Activated CD4-positive, alpha-beta T cell treated with anti-CD3 and anti-CD28 coated beads for 36 hours (primary cell): ENCODE measurements at regions of chr2 and their contacts with region 1.

Region 1: GRCh38 chr2:26330113-26330549 is 15.8 kb upstream of the SELENOI start:
- DNase-seq: peak; percentile 94
- ATAC-seq: peak; percentile 97
- H3K4me3 Mint-ChIP-seq: no peak overlapping the region
- H3K27ac Mint-ChIP-seq: no peak overlapping the region
- H3K4me1 Mint-ChIP-seq: peaks cover 9% of the 10 kb centered on the region
- H3K27me3 Mint-ChIP-seq: no peaks in the 10 kb centered on the region

Region 2: GRCh38 chr2:25991965-25992364 is 338.2 kb before region 1 on chr2:
- CTCF ChIA-PET with region 1: no interaction called
- POLR2A ChIA-PET with region 1: no interaction called
- intact Hi-C with region 1: loop called in 1 of 2 experiments (anchors 1 kb)
- DNase-seq: no peak
- ATAC-seq: peak; percentile 33
- H3K4me3 Mint-ChIP-seq: no peak overlapping the region
- H3K27ac Mint-ChIP-seq: no peak overlapping the region
- H3K4me1 Mint-ChIP-seq: peaks cover 8% of the 10 kb centered on the region
- H3K27me3 Mint-ChIP-seq: no peaks in the 10 kb centered on the region

Region 3: GRCh38 chr2:26033270-26033817 is 296.8 kb before region 1 on chr2:
- CTCF ChIA-PET with region 1: no interaction called
- POLR2A ChIA-PET with region 1: no interaction called
- intact Hi-C with region 1: no loop called
- DNase-seq: no peak
- ATAC-seq: peak; percentile 31
- H3K4me3 Mint-ChIP-seq: peak overlapping the region; percentile 98
- H3K27ac Mint-ChIP-seq: peak overlapping the region; percentile 90
- H3K4me1 Mint-ChIP-seq: peaks cover 26% of the 10 kb centered on the region
- H3K27me3 Mint-ChIP-seq: no peaks in the 10 kb centered on the region

Region 4: GRCh38 chr2:26172871-26173775 is 157.0 kb before region 1 on chr2 and contains the start of gene GAREM2:
- CTCF ChIA-PET with region 1: interaction called, 3 read pairs
- POLR2A ChIA-PET with region 1: no interaction called
- intact Hi-C with region 1: loop called (anchors 1 to 5 kb)
- DNase-seq: no peak
- ATAC-seq: peak; percentile 14
- H3K4me3 Mint-ChIP-seq: peak within 1 kb of the TSS; percentile 67
- H3K27ac Mint-ChIP-seq: no peak within 1 kb of the TSS
- H3K4me1 Mint-ChIP-seq: peaks cover 5% of the 10 kb centered on the region
- H3K27me3 Mint-ChIP-seq: peaks cover 26% of the 10 kb centered on the region
- total RNA-seq, gene GAREM2: 3.2 to 5.7 TPM

Region 5: GRCh38 chr2:26184555-26185303 is 145.4 kb before region 1 on chr2:
- CTCF ChIA-PET with region 1: no interaction called
- POLR2A ChIA-PET with region 1: no interaction called
- intact Hi-C with region 1: loop called in 1 of 2 experiments (anchors 5 kb)
- DNase-seq: peak; percentile 92
- ATAC-seq: peak; percentile 97
- H3K4me3 Mint-ChIP-seq: peak overlapping the region; percentile 75
- H3K27ac Mint-ChIP-seq: peak overlapping the region; percentile 60
- H3K4me1 Mint-ChIP-seq: peaks cover 16% of the 10 kb centered on the region
- H3K27me3 Mint-ChIP-seq: peaks cover 15% of the 10 kb centered on the region

Region 6: GRCh38 chr2:26299471-26300101 is 30.5 kb before region 1 on chr2:
- CTCF ChIA-PET with region 1: no interaction called
- POLR2A ChIA-PET with region 1: interaction called, 3 read pairs
- intact Hi-C with region 1: loop called in 1 of 2 experiments (anchors 5 kb)
- DNase-seq: peak; percentile 51
- ATAC-seq: peak; percentile 56
- H3K4me3 Mint-ChIP-seq: no peak overlapping the region
- H3K27ac Mint-ChIP-seq: no peak overlapping the region
- H3K4me1 Mint-ChIP-seq: no peaks in the 10 kb centered on the region
- H3K27me3 Mint-ChIP-seq: no peaks in the 10 kb centered on the region